Cardiac septum (tissue), 1 donor: ENCODE measurements at regions of chr2 and their contacts with region 1.

Region 1: GRCh38 chr2:129233751-129234406 is 745.6 kb upstream of the RAB6C start:
- DNase-seq: no peak

Region 2: GRCh38 chr2:128362846-128363228 is 871.0 kb before region 1 on chr2:
- intact Hi-C with region 1: loop called (anchors 5 kb)
- DNase-seq: peak; percentile 39

Region 3: GRCh38 chr2:129369437-129369836 is 135.6 kb after region 1 on chr2:
- intact Hi-C with region 1: no loop called
- DNase-seq: no peak